ENCODE measurements at regions of chr6 and their contacts with region 1.

Region 1: GRCh38 chr6:56292505-56293181 is 45.3 kb upstream of the COL21A1 start:
- DNase-seq: peak; percentile 9
- ATAC-seq: no peak
- H3K4me3 Mint-ChIP-seq: no peak overlapping the region
- H3K27ac Mint-ChIP-seq: no peak overlapping the region
- H3K4me1 Mint-ChIP-seq: no peaks in the 10 kb centered on the region
- H3K27me3 Mint-ChIP-seq: no peaks in the 10 kb centered on the region

Region 2: DNA sequence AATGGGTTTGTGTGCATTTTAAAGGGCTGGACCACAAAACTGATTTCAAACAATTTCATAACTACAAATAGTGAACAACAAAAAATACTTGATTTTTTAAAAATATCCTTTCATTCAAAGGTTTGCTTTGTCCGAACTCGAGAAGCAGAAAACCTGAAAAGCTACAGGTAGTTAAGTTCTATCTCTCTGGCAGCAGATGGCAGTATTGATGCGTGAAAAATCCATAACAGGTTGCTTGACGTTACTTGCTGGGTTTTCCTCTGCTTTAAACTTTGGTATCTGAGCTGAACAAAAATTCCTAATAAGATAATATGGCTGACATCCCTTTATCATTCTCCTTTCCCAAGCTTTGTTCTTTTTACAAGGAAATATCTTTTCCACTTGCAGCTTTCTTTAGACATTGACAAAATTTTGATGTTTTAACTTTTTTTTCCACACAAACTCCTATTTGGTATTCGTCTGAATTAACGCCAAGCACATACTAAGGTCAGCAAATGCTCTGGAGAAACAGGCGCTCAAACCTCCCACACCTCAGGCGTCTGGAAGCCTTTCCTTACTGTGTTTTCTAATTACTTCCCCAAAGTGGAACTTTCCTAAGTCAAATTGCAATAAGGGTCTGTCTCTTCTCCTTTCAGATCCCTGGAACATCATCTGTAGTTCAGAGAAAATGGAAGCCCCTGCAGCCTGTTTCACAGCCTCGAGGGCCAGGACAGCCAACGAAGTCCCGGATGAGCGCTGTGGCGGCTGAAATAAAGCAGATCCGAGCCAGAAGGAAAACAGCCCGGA is 1015.7 kb before region 1 on chr6:
- CTCF ChIA-PET with region 1: interaction called, 7 read pairs
- POLR2A ChIA-PET with region 1: no interaction called
- intact Hi-C with region 1: loop called in 1 of 2 experiments (anchors 5 kb)
- DNase-seq: peak; percentile 21
- ATAC-seq: no peak
- H3K4me3 Mint-ChIP-seq: no peak overlapping the region
- H3K27ac Mint-ChIP-seq: no peak overlapping the region
- H3K4me1 Mint-ChIP-seq: no peaks in the 10 kb centered on the region
- H3K27me3 Mint-ChIP-seq: no peaks in the 10 kb centered on the region

Region 3: DNA sequence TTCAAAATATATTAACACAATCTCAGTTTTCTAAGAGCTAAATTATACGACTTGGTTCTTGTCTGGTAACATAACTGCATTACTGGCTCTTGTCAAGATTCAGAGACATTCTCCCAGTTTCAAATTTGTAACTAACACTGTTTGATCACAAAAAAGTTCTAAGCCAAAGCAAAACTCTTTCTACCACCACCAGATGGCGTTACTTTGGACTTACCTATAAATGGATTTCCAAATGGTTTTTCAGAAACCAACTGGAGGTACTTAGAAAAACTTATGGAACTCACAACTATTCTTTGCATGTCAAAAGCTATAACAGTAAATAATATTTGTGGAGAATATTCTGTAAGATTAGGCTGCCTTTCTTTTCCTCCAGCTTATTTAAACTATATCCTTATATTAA is 999.5 kb before region 1 on chr6:
- CTCF ChIA-PET with region 1: no interaction called
- POLR2A ChIA-PET with region 1: no interaction called
- intact Hi-C with region 1: loop called in 1 of 2 experiments (anchors 5 kb)
- DNase-seq: no peak
- ATAC-seq: no peak
- H3K4me3 Mint-ChIP-seq: no peak overlapping the region
- H3K27ac Mint-ChIP-seq: no peak overlapping the region
- H3K4me1 Mint-ChIP-seq: no peaks in the 10 kb centered on the region
- H3K27me3 Mint-ChIP-seq: no peaks in the 10 kb centered on the region

Region 4: GRCh38 chr6:55445648-55446204 is 846.9 kb before region 1 on chr6:
- CTCF ChIA-PET with region 1: no interaction called
- POLR2A ChIA-PET with region 1: no interaction called
- intact Hi-C with region 1: loop called in 1 of 2 experiments (anchors 10 kb)
- DNase-seq: no peak
- ATAC-seq: no peak
- H3K4me3 Mint-ChIP-seq: no peak overlapping the region
- H3K27ac Mint-ChIP-seq: no peak overlapping the region
- H3K4me1 Mint-ChIP-seq: no peaks in the 10 kb centered on the region
- H3K27me3 Mint-ChIP-seq: no peaks in the 10 kb centered on the region

Region 5: DNA sequence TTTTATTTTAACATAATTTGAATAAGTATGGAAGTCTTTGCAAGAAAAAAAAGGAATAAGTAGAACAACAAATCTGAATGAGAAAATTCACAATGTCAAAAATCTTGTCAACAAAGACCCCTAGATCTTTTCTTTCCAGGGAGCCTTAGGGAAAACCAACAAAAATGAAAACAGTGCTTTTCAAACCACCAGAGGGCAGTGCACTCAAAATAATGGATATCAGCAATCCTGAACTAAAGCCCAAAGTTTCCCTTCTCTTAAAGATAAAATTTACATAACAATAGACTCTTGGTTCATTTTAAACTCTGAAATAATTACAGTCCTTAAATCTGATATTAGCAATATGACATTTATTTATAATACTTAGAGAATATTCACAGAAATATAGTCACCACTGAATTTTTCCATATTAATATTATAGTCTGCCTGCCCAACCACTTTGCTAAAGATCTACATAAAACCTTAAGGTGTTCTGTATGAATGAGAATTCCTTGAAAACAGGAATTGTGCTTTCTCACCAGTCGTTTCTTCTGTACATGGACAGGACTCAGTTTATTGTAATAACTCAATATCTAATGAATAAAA is 311.9 kb before region 1 on chr6:
- CTCF ChIA-PET with region 1: no interaction called
- POLR2A ChIA-PET with region 1: no interaction called
- intact Hi-C with region 1: loop called (anchors 2 to 5 kb)
- DNase-seq: peak; percentile 9
- ATAC-seq: no peak
- H3K4me3 Mint-ChIP-seq: no peak overlapping the region
- H3K27ac Mint-ChIP-seq: no peak overlapping the region
- H3K4me1 Mint-ChIP-seq: no peaks in the 10 kb centered on the region
- H3K27me3 Mint-ChIP-seq: no peaks in the 10 kb centered on the region

Region 6: GRCh38 chr6:56542364-56543331 is 250.0 kb after region 1 on chr6:
- CTCF ChIA-PET with region 1: no interaction called
- POLR2A ChIA-PET with region 1: no interaction called
- intact Hi-C with region 1: no loop called
- DNase-seq: peak; percentile 85
- ATAC-seq: peak; percentile 95
- H3K4me3 Mint-ChIP-seq: no peak overlapping the region
- H3K27ac Mint-ChIP-seq: no peak overlapping the region
- H3K4me1 Mint-ChIP-seq: no peaks in the 10 kb centered on the region
- H3K27me3 Mint-ChIP-seq: no peaks in the 10 kb centered on the region